T-cell (primary cell): ENCODE measurements at regions of chr6 and their contacts with region 1.

Region 1: GRCh38 chr6:139124887-139125672 is 9.8 kb upstream of the HECA start:
- DNase-seq: peak; percentile 59 to 91 (median 78)
- ATAC-seq: peak; percentile 98 to 99 (median 98)
- H3K4me3 ChIP-seq: no peak overlapping the region
- H3K4me3 Mint-ChIP-seq: peak overlapping the region; percentile 45 to 69 (median 52)
- H3K27ac ChIP-seq: peak overlapping the region; percentile 83
- H3K27ac Mint-ChIP-seq: peak overlapping the region; percentile 92 to 97
- H3K4me1 ChIP-seq: peaks cover 23 to 26% of the 10 kb centered on the region in 2 experiments
- H3K4me1 Mint-ChIP-seq: peaks cover 57 to 67% (median 61%) of the 10 kb centered on the region in 3 donors
- H3K27me3 ChIP-seq: no peaks in the 10 kb centered on the region
- H3K27me3 Mint-ChIP-seq: no peaks in the 10 kb centered on the region

Region 2: DNA sequence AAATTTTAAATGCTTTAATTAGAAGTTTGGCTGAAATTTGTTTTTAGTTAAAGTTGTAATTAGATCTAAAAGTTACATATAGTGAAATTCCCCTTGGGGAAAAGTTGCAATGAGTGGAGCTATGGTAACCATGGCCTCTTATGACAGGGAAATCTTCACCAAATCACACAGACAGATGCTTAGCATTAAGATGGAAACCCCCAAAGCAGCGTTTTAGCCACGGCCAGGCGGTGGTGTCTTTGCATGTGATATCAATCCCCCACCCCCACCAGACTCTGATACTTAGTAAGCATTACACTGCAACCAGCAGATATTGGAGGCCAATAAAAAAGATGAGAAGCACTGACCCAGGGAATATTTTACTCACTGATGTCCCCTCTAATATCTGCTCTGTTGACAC is 212.8 kb before region 1 on chr6:
- CTCF ChIA-PET with region 1: no interaction called
- POLR2A ChIA-PET with region 1: no interaction called
- DNase-seq: no peak
- ATAC-seq: no peak
- H3K4me3 ChIP-seq: no peak overlapping the region
- H3K4me3 Mint-ChIP-seq: no peak overlapping the region
- H3K27ac ChIP-seq: no peak overlapping the region
- H3K27ac Mint-ChIP-seq: no peak overlapping the region
- H3K4me1 ChIP-seq: no peaks in the 10 kb centered on the region
- H3K4me1 Mint-ChIP-seq: no peaks in the 10 kb centered on the region
- H3K27me3 ChIP-seq: no peaks in the 10 kb centered on the region
- H3K27me3 Mint-ChIP-seq: no peaks in the 10 kb centered on the region

Region 3: GRCh38 chr6:138931660-138932059 is 193.4 kb before region 1 on chr6:
- CTCF ChIA-PET with region 1: no interaction called
- POLR2A ChIA-PET with region 1: no interaction called
- DNase-seq: no peak
- ATAC-seq: no peak
- H3K4me3 ChIP-seq: no peak overlapping the region
- H3K4me3 Mint-ChIP-seq: no peak overlapping the region
- H3K27ac ChIP-seq: no peak overlapping the region
- H3K27ac Mint-ChIP-seq: peak overlapping the region in 1 of 2 donors; percentile 76
- H3K4me1 ChIP-seq: no peaks in the 10 kb centered on the region
- H3K4me1 Mint-ChIP-seq: peaks cover 0 to 15% (median 13%) of the 10 kb centered on the region in 3 donors
- H3K27me3 ChIP-seq: no peaks in the 10 kb centered on the region
- H3K27me3 Mint-ChIP-seq: no peaks in the 10 kb centered on the region

Region 4: GRCh38 chr6:139109558-139109957 is 15.5 kb before region 1 on chr6:
- CTCF ChIA-PET with region 1: interaction called in 1 of 2 experiments, 12 read pairs
- POLR2A ChIA-PET with region 1: no interaction called
- DNase-seq: peak in 12 of 35 experiments; percentile 8 to 40 (median 25)
- ATAC-seq: no peak
- H3K4me3 ChIP-seq: no peak overlapping the region
- H3K4me3 Mint-ChIP-seq: no peak overlapping the region
- H3K27ac ChIP-seq: no peak overlapping the region
- H3K27ac Mint-ChIP-seq: peak overlapping the region; percentile 41 to 96
- H3K4me1 ChIP-seq: peaks cover 30 to 31% of the 10 kb centered on the region in 2 experiments
- H3K4me1 Mint-ChIP-seq: peaks cover 54 to 56% (median 56%) of the 10 kb centered on the region in 3 donors
- H3K27me3 ChIP-seq: no peaks in the 10 kb centered on the region
- H3K27me3 Mint-ChIP-seq: no peaks in the 10 kb centered on the region

Region 5: DNA sequence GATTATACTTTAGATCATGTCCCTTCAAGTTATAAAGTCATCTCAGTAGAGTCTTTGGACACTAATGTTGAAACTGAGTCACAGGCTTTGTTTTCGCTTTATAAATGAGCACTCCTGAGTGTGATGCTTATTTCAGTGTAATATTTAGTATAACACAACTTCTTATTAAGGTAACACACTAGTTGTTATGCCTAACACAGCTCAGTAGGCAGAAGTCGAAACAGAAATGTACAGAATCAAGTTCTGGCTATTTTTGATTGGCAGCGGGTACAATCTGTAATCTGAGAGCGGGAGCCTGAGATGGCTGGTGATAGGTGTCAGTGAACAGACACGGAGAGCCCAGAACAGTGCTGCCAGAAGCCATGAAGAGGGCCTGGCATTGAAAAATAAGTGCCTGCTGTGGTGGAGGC is 21.2 kb after region 1 on chr6:
- CTCF ChIA-PET with region 1: interaction called, 3 to 10 read pairs
- POLR2A ChIA-PET with region 1: interaction called, 3 to 10 read pairs
- DNase-seq: no peak
- ATAC-seq: peak; percentile 31 to 49 (median 34)
- H3K4me3 ChIP-seq: peak overlapping the region in 1 of 2 donors; percentile 26
- H3K4me3 Mint-ChIP-seq: peak overlapping the region; percentile 69 to 83 (median 72)
- H3K27ac ChIP-seq: peak overlapping the region; percentile 36
- H3K27ac Mint-ChIP-seq: peak overlapping the region; percentile 90 to 92
- H3K4me1 ChIP-seq: peaks cover 67 to 72% of the 10 kb centered on the region in 2 experiments
- H3K4me1 Mint-ChIP-seq: peaks cover 93 to 95% (median 94%) of the 10 kb centered on the region in 3 donors
- H3K27me3 ChIP-seq: no peaks in the 10 kb centered on the region
- H3K27me3 Mint-ChIP-seq: no peaks in the 10 kb centered on the region

Region 6: GRCh38 chr6:139219271-139219729 is 94.2 kb after region 1 on chr6:
- CTCF ChIA-PET with region 1: interaction called in 1 of 2 experiments, 10 read pairs
- POLR2A ChIA-PET with region 1: no interaction called
- DNase-seq: peak; percentile 40 to 82 (median 63)
- ATAC-seq: peak; percentile 99 to 100 (median 100)
- H3K4me3 ChIP-seq: no peak overlapping the region
- H3K4me3 Mint-ChIP-seq: peak overlapping the region; percentile 12 to 44 (median 41)
- H3K27ac ChIP-seq: peak overlapping the region; percentile 10
- H3K27ac Mint-ChIP-seq: peak overlapping the region; percentile 95 to 97
- H3K4me1 ChIP-seq: peaks cover 0 to 7% of the 10 kb centered on the region in 2 experiments
- H3K4me1 Mint-ChIP-seq: peaks cover 8 to 11% (median 10%) of the 10 kb centered on the region in 3 donors
- H3K27me3 ChIP-seq: no peaks in the 10 kb centered on the region
- H3K27me3 Mint-ChIP-seq: no peaks in the 10 kb centered on the region

Region 7: DNA sequence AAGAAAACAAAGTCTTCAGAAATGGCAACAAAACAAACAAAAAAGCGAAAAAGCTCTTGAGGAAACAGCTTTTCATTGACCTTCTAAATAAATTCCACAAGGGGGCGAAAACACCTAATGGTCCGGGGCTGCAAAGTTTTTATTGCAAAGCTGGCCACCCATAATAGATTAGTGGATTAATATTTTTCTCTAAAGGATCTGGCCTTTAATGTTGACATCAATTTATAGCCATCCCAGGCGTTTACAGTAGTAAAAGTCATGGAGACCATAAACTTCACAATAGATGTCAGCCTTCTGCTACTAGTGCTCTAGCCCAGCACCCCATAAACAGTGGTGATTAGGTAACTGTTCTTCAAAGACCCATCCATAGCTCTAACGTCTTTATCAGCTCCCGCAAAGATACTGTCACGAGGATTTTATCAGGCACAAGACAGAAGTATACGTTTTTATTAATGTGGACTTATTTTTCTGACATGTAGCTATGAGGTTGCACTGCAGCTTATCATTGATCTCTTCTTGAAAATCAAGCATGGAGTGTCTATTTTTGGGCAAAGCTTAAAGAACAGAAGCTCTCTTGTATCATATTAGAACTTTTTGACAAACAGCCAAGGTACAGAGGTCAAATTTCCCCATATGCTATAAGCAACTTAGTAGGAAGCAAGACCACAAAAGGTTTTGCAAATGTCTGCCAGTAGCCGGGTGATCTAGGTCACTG is 244.6 kb after region 1 on chr6:
- CTCF ChIA-PET with region 1: interaction called, 10 to 42 read pairs
- POLR2A ChIA-PET with region 1: interaction called, 3 to 10 read pairs
- DNase-seq: peak in 2 of 35 experiments; percentile 13 to 67
- ATAC-seq: no peak
- H3K4me3 ChIP-seq: peak overlapping the region in 1 of 2 donors; percentile 13
- H3K4me3 Mint-ChIP-seq: peak overlapping the region; percentile 60 to 100 (median 99)
- H3K27ac ChIP-seq: peak overlapping the region; percentile 93
- H3K27ac Mint-ChIP-seq: peak overlapping the region; percentile 97 to 99
- H3K4me1 ChIP-seq: peaks cover 18 to 19% of the 10 kb centered on the region in 2 experiments
- H3K4me1 Mint-ChIP-seq: peaks cover 42 to 48% (median 47%) of the 10 kb centered on the region in 3 donors
- H3K27me3 ChIP-seq: no peaks in the 10 kb centered on the region
- H3K27me3 Mint-ChIP-seq: no peaks in the 10 kb centered on the region

Region 8: DNA sequence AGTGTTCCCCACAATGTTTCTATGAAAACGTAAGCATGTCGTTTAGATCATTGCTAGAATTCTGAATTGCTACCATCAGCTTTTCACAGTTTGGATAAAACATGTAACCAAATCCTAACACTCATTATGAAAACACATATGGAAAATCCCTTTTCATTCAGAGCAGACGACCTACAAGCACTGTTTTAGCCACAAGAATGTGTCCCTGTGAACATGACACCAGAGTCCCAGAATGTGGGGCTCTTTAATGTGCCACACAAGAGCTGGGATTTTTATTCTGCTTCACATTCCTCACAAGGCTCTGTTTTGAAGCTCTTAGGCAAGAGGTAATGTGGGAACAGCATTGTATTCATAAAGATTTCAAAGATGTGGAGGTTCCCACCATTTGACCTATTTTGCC is 390.4 kb after region 1 on chr6:
- CTCF ChIA-PET with region 1: no interaction called
- POLR2A ChIA-PET with region 1: no interaction called
- DNase-seq: no peak
- ATAC-seq: no peak
- H3K4me3 ChIP-seq: no peak overlapping the region
- H3K4me3 Mint-ChIP-seq: no peak overlapping the region
- H3K27ac ChIP-seq: no peak overlapping the region
- H3K27ac Mint-ChIP-seq: no peak overlapping the region
- H3K4me1 ChIP-seq: no peaks in the 10 kb centered on the region
- H3K4me1 Mint-ChIP-seq: peaks cover 0 to 4% (median 4%) of the 10 kb centered on the region in 3 donors
- H3K27me3 ChIP-seq: no peaks in the 10 kb centered on the region
- H3K27me3 Mint-ChIP-seq: no peaks in the 10 kb centered on the region